Common myeloid progenitor, CD34-positive (primary cell): ENCODE measurements at regions of chr7 and their contacts with region 1.

Region 1: DNA sequence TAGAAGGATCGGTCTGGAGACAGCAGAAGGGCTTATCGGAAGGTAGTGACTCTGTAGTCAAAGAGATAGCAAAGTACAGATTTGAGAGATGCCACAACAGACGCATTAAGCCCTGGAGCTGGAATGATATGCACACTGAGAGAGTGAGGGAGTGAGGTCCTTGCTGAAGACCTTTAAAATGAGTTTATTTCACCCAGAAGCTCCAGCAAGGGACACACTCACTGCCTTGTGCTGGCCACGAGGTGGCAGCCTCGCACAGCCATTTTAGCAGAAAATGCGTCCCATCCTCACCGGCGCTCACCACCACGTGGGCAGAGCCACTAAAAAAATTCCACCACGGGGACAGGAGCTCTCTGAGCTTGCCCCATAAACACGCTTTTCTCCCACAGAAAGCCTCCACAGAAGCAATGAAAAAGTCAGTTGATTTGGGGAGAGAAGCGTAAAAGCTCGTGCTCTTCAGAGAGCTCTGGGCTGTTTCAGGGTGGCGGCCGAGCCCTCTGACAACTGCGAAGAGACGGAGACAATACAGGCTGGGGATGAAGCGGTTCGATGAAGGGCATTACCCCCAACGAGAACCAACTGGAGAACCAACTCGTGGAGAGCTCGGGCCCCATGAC is 163.0 kb upstream of the KLF14 start:
- DNase-seq: peak; percentile 83 to 91 (median 88)
- H3K4me3 ChIP-seq: no peak overlapping the region
- H3K27ac ChIP-seq: no peak overlapping the region
- H3K4me1 ChIP-seq: peaks cover 0 to 28% (median 12%) of the 10 kb centered on the region in 4 experiments
- H3K27me3 ChIP-seq: no peaks in the 10 kb centered on the region

Region 2: GRCh38 chr7:130869918-130870317 is 27.1 kb before region 1 on chr7:
- CTCF ChIA-PET with region 1: interaction called, 14 read pairs
- POLR2A ChIA-PET with region 1: no interaction called
- DNase-seq: no peak
- H3K4me3 ChIP-seq: no peak overlapping the region
- H3K27ac ChIP-seq: no peak overlapping the region
- H3K4me1 ChIP-seq: peaks cover 0 to 9% (median 3%) of the 10 kb centered on the region in 4 experiments
- H3K27me3 ChIP-seq: no peaks in the 10 kb centered on the region

Region 3: GRCh38 chr7:130921391-130922180 is 24.6 kb after region 1 on chr7:
- CTCF ChIA-PET with region 1: interaction called, 10 read pairs
- POLR2A ChIA-PET with region 1: no interaction called
- DNase-seq: no peak
- H3K4me3 ChIP-seq: no peak overlapping the region
- H3K27ac ChIP-seq: no peak overlapping the region
- H3K4me1 ChIP-seq: peaks cover 9 to 50% (median 38%) of the 10 kb centered on the region in 4 experiments
- H3K27me3 ChIP-seq: no peaks in the 10 kb centered on the region

Region 4: GRCh38 chr7:130941322-130942210 is 44.6 kb after region 1 on chr7:
- CTCF ChIA-PET with region 1: interaction called, 15 read pairs
- POLR2A ChIA-PET with region 1: no interaction called
- DNase-seq: peak in 2 of 3 donors; percentile 22 to 38
- H3K4me3 ChIP-seq: peak overlapping the region in 5 of 7 experiments; percentile 43 to 71 (median 59)
- H3K27ac ChIP-seq: peak overlapping the region; percentile 56 to 89
- H3K4me1 ChIP-seq: peaks cover 4 to 23% (median 16%) of the 10 kb centered on the region in 4 experiments
- H3K27me3 ChIP-seq: no peaks in the 10 kb centered on the region

Region 5: GRCh38 chr7:130996841-130997231 is 99.8 kb after region 1 on chr7:
- CTCF ChIA-PET with region 1: interaction called, 37 read pairs
- POLR2A ChIA-PET with region 1: interaction called, 4 read pairs
- DNase-seq: peak in 2 of 3 donors; percentile 57 to 66
- H3K4me3 ChIP-seq: peak overlapping the region in 2 of 7 experiments; percentile 28 to 41
- H3K27ac ChIP-seq: peak overlapping the region; percentile 42 to 69
- H3K4me1 ChIP-seq: peaks cover 15 to 60% (median 40%) of the 10 kb centered on the region in 4 experiments
- H3K27me3 ChIP-seq: no peaks in the 10 kb centered on the region

Region 6: GRCh38 chr7:131040467-131040932 is 143.5 kb after region 1 on chr7:
- CTCF ChIA-PET with region 1: interaction called, 108 read pairs
- POLR2A ChIA-PET with region 1: interaction called, 4 read pairs
- DNase-seq: peak; percentile 64 to 84 (median 78)
- H3K4me3 ChIP-seq: peak overlapping the region in 2 of 7 experiments; percentile 25 to 68
- H3K27ac ChIP-seq: no peak overlapping the region
- H3K4me1 ChIP-seq: peaks cover 4 to 27% (median 14%) of the 10 kb centered on the region in 4 experiments
- H3K27me3 ChIP-seq: no peaks in the 10 kb centered on the region